Activated CD4-positive, alpha-beta memory T cell treated with anti-CD3 and anti-CD28 coated beads for 36 hours (primary cell): ENCODE measurements at regions of chr19 and their contacts with region 1.

Region 1: DNA sequence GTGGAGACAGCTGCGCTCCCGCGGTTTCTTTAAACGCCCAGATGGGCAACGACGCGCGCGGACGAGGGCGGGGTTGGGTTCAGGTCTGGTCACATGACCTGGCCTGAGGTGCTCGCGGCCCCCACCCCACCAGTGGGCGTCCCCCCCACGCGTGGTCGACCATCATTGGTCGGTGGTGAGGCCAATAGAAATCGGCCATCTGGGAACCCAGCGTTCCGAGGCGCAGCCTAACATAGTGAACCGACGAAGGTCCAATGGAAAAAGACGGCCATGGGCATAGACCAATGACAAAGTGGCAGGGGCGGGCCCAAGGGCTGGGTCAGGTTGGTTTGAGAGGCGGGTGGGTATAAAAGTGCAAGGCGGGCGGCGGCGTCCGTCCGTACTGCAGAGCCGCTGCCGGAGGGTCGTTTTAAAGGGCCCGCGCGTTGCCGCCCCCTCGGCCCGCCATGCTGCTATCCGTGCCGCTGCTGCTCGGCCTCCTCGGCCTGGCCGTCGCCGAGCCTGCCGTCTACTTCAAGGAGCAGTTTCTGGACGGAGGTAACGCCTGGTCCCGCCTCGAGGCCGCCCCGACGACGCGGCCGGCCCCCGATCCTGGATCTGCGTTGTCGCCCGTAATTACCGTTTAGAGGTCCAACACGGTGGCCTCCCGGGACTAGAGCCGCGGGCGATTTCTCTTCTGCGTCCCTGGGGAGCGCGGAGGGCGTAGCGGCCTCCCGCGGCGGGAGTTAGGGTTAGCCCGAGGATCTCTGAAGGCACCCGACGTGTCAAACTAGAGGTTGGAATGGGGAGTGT is at the start of gene CALR:
- DNase-seq: peak; percentile 99
- H3K4me3 Mint-ChIP-seq: peak within 1 kb of the TSS; percentile 98
- H3K27ac Mint-ChIP-seq: peak within 1 kb of the TSS; percentile 95
- H3K4me1 Mint-ChIP-seq: peaks cover 53% of the 10 kb centered on the region
- H3K27me3 Mint-ChIP-seq: no peaks in the 10 kb centered on the region
- total RNA-seq, gene CALR: 625 to 642 TPM

Region 2: DNA sequence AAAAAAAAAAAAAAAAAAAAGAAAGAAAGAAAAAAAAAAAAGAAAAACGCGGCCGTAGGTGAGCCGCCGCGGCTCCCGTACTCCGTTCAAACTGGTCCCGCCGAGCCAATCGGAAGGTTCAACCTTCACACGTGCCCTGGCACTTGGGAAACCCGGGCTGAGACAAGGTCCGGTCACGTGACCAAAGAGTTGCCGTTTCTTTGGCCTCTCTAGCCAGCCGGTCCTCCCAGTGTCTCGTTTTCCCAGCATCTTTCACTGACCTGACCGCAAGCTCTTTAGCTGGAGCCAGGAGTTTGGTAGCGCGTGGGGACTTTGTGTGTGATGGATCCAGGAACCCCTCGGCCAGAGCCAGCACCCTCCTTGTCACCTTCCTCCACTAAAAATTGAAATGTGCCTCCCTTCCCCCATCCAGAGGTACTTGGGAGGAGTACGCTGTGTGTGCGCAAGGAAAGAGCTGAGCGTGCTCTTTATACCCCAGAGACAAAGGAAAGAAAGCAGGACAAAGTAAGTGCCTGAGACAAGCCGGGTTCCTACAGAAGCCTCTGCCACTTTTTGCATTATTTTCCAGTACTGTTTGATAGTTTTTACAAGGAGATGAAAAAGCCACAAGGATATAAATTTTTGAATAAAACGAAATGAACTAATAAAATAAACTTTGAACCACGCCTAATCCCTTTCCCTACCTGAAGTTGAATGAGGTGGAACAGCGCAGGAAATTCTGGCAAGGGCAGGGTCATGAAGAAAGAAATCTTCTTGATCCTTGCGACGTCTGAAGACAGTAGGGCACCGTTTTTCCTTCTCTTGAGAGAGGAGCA is 215.7 kb before region 1 on chr19:
- CTCF ChIA-PET with region 1: no interaction called
- POLR2A ChIA-PET with region 1: interaction called, 9 read pairs
- intact Hi-C with region 1: loop called (anchors 5 kb)
- DNase-seq: peak; percentile 96
- H3K4me3 Mint-ChIP-seq: peak overlapping the region; percentile 92
- H3K27ac Mint-ChIP-seq: peak overlapping the region; percentile 95
- H3K4me1 Mint-ChIP-seq: peaks cover 28% of the 10 kb centered on the region
- H3K27me3 Mint-ChIP-seq: no peaks in the 10 kb centered on the region

Region 3: GRCh38 chr19:12881172-12881808 is 57.1 kb before region 1 on chr19 and contains the start of gene DNASE2:
- CTCF ChIA-PET with region 1: interaction called, 10 read pairs
- POLR2A ChIA-PET with region 1: interaction called, 10 read pairs
- intact Hi-C with region 1: no loop called
- DNase-seq: peak; percentile 96
- H3K4me3 Mint-ChIP-seq: peak within 1 kb of the TSS; percentile 89
- H3K27ac Mint-ChIP-seq: peak within 1 kb of the TSS; percentile 86
- H3K4me1 Mint-ChIP-seq: peaks cover 24% of the 10 kb centered on the region
- H3K27me3 Mint-ChIP-seq: no peaks in the 10 kb centered on the region
- total RNA-seq, gene DNASE2: 27.0 to 27.5 TPM

Region 4: DNA sequence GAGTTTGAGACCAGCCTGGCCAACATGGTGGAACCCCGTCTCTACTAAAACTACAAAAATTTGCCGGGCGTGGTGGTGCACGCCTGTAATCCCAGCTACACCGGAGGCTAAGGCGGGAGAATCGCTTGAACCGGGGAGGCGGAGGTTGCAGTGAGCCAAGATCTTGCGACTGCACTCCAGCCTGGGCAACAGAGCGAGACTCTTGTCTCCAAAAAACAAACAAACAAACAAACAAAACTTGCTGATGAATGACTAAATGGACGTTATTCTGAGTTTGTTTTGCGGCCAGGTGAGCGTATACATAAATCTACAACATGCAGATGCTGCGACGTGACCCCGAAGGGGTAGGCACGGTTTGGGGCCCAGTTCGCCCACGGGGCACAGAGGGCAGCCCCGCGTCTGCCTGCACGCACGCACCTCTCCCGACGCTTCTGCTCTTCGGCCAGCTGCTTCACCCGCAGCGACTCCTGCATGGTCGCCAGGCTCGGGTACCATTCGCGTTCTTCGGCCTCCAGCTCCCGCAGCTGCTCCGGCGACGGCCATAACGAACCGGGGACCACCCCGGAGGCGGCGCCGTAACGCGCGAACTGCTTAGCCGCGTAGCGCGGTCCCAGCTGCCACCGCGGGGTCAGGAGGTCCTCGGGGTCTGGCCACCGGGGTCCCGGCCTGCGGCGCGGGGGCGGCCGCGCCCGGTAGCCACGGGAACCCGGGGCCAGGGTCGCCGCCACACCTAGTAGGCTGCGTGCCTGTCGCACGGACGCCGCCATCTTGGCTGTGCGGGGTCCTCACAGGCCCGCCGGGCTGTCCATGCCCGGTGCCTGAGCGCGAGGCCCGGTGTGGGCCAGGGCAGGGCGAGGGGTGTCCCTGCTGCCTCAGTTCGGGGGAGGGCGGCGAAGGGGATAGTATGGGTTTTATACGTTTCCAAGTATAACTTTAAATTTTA is 18.3 kb after region 1 on chr19 and contains the start of gene GADD45GIP1:
- CTCF ChIA-PET with region 1: no interaction called
- POLR2A ChIA-PET with region 1: interaction called, 6 read pairs
- intact Hi-C with region 1: loop called (anchors 1 kb)
- DNase-seq: peak; percentile 90
- H3K4me3 Mint-ChIP-seq: peak within 1 kb of the TSS; percentile 88
- H3K27ac Mint-ChIP-seq: peak within 1 kb of the TSS; percentile 94
- H3K4me1 Mint-ChIP-seq: peaks cover 39% of the 10 kb centered on the region
- H3K27me3 Mint-ChIP-seq: no peaks in the 10 kb centered on the region
- total RNA-seq, gene GADD45GIP1: 31.2 to 32.6 TPM

Region 5: DNA sequence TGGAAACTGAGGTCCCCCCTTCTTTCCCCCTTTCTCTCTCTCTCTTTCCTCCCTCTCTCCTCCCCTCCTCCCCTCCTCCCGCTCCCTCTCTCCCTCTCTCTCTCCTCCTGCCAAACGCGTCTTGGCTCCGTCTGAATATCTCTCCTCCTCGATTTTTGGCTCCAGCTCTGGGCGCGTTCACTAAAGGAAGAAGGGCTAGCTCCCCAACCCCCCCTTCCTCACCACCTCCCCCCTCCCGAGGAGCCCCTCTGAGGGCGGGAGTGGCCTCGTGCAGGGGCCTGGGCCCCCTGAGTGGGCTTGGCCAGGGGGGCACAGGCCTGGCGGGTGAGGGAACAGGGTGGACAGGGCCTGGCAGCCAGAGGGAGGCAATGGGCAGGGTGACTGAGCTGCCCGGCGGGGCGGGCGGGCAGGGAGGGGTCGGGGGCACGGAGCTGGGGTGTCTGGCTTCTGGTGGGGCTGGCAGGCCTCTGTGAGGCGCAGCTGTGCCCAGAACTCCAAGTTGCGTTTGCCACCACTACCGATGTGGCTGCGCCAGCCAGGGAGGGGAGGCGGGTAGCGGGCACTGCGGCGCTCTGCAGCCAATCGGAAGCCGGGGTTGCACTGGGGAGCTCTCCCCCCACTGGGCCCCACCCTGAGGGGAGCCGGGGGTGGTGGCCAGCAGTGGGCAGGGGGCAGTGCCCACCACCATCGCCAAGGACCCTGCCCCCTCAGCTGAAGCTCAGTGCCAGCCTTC is 63.9 kb after region 1 on chr19:
- CTCF ChIA-PET with region 1: no interaction called
- POLR2A ChIA-PET with region 1: no interaction called
- intact Hi-C with region 1: no loop called
- DNase-seq: no peak
- H3K4me3 Mint-ChIP-seq: no peak overlapping the region
- H3K27ac Mint-ChIP-seq: no peak overlapping the region
- H3K4me1 Mint-ChIP-seq: no peaks in the 10 kb centered on the region
- H3K27me3 Mint-ChIP-seq: peaks cover 5% of the 10 kb centered on the region